Thyroid gland (tissue), 4 donors: ENCODE measurements at regions of chr4 and their contacts with region 1.

Region 1: DNA sequence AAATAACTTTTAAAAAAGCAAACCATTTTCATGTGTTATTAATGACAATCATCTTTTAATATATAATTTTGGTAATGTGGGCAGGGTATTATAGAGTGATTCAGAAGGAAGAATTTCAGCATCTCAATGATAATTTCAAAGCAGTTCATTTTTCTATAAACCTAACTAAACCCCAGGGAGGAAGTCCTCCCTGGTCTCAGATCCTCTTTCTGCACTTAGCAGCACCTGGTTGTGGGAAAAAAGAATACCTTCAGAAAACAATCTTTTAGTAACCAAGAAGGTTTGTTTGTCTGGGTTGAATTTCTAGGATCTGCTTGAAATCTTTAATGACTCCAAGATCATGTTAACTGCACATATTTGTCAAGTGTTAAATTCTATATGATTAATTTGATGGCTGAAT is 29.9 kb downstream of the DKK2 start:
- DNase-seq: no peak
- H3K4me3 ChIP-seq: no peak overlapping the region
- H3K27ac ChIP-seq: no peak overlapping the region
- H3K4me1 ChIP-seq: no peaks in the 10 kb centered on the region
- H3K27me3 ChIP-seq: no peaks in the 10 kb centered on the region
- CTCF ChIP-seq: no peak
- POLR2A ChIP-seq: no peak

Region 2: GRCh38 chr4:106681381-106681921 is 324.8 kb before region 1 on chr4:
- intact Hi-C with region 1: no loop called
- DNase-seq: no peak
- H3K4me3 ChIP-seq: no peak overlapping the region
- H3K27ac ChIP-seq: no peak overlapping the region
- H3K4me1 ChIP-seq: no peaks in the 10 kb centered on the region
- H3K27me3 ChIP-seq: no peaks in the 10 kb centered on the region
- CTCF ChIP-seq: no peak
- POLR2A ChIP-seq: no peak

Region 3: GRCh38 chr4:106809076-106809475 is 197.1 kb before region 1 on chr4:
- intact Hi-C with region 1: no loop called
- DNase-seq: no peak
- H3K4me3 ChIP-seq: no peak overlapping the region
- H3K27ac ChIP-seq: no peak overlapping the region
- H3K4me1 ChIP-seq: no peaks in the 10 kb centered on the region
- H3K27me3 ChIP-seq: no peaks in the 10 kb centered on the region
- CTCF ChIP-seq: no peak
- POLR2A ChIP-seq: no peak

Region 4: GRCh38 chr4:106893903-106894302 is 112.3 kb before region 1 on chr4:
- intact Hi-C with region 1: loop called (anchors 5 kb)
- DNase-seq: no peak
- H3K4me3 ChIP-seq: no peak overlapping the region
- H3K27ac ChIP-seq: no peak overlapping the region
- H3K4me1 ChIP-seq: no peaks in the 10 kb centered on the region
- H3K27me3 ChIP-seq: no peaks in the 10 kb centered on the region
- CTCF ChIP-seq: no peak
- POLR2A ChIP-seq: no peak